Activated CD4-positive, alpha-beta T cell treated with anti-CD3 and anti-CD28 coated beads, Interleukin-2, amount 10 ng/mL, durations not matched to agents 7 days and 5 days (primary cell): ENCODE measurements at regions of chr11 and their contacts with region 1.

Region 1: GRCh38 chr11:117107701-117108590 is 9.7 kb upstream of the SIK3 start:
- DNase-seq: no peak
- H3K4me3 Mint-ChIP-seq: no peak overlapping the region
- H3K27ac Mint-ChIP-seq: no peak overlapping the region
- H3K4me1 Mint-ChIP-seq: peaks cover 7% of the 10 kb centered on the region
- H3K27me3 Mint-ChIP-seq: peaks cover 5% of the 10 kb centered on the region

Region 2: GRCh38 chr11:116853461-116854073 is 254.4 kb before region 1 on chr11:
- CTCF ChIA-PET with region 1: interaction called, 11 read pairs
- POLR2A ChIA-PET with region 1: no interaction called
- DNase-seq: peak; percentile 82
- H3K4me3 Mint-ChIP-seq: peak overlapping the region; percentile 29
- H3K27ac Mint-ChIP-seq: peak overlapping the region; percentile 95
- H3K4me1 Mint-ChIP-seq: peaks cover 67% of the 10 kb centered on the region
- H3K27me3 Mint-ChIP-seq: no peaks in the 10 kb centered on the region

Region 3: DNA sequence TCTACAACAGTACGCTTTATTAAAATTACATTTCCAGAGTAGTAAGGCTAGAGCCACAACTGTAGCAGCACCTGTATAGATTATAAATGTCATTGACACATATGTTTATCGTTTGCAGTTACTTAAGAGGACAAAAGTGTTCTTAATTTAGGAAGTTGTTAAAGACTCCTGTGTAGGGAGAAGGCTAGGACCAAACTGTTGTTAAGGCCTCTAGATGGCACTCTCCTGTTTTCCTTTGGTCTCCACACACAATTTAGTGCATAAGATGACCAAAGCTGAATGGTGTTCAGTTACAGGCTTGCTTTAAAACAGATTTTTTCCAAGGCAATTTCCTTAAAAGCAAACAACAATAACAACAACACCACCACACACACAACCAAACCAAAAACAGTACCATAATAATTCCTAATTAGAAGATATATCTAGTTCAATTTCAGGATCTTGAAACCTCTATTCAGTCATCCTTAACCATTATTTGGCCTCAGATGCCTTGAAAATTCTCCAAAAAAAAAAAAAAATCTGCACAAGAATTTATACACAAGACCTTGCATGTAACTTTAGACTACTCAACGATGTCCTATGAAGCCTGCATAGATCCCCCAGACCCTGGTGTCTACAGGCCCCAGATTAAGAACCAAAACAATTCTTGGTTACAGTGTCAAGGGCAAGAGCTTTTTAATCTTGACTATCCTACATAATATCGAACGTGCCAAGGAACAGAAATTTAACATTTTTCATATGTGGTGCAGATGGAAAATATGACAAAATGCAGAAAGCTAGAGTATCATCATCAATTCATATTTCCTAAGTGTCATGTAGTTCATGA is 227.9 kb before region 1 on chr11:
- CTCF ChIA-PET with region 1: interaction called, 10 read pairs
- POLR2A ChIA-PET with region 1: no interaction called
- DNase-seq: peak; percentile 41
- H3K4me3 Mint-ChIP-seq: no peak overlapping the region
- H3K27ac Mint-ChIP-seq: no peak overlapping the region
- H3K4me1 Mint-ChIP-seq: peaks cover 15% of the 10 kb centered on the region
- H3K27me3 Mint-ChIP-seq: no peaks in the 10 kb centered on the region

Region 4: DNA sequence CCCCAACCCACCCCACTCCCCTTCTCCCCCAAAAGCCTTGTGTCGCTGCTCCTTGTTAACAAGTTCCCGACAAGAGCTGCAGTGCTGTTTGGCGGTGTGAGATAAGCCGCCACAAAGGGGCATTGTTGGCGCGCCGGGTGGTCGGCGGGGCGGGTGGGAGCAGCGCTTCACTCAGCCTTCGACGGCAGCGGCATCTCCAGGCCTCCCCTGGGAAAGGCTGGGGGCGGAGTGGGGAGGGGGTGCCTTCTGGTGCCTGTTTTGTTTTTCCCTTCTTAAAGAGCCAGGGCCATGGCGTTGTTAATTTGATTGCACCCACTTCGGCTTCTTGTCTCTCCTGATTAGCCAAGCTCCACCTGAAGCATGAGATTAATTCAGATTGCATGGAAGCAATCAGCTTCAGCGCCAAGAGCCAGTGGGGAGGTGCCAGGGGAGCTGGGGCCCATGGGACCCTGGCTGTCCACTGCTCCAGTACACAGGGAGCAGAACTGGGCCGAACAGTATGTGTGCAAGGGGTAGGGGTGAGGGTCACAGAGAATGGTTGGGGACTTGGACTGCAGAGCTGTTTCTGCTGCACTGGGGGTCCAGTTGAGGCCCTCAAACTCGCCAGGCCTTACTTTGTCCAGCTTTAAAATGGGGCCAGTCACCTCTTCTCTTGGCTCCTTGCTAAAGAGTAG is 384.8 kb after region 1 on chr11:
- CTCF ChIA-PET with region 1: no interaction called
- POLR2A ChIA-PET with region 1: no interaction called
- DNase-seq: no peak
- H3K4me3 Mint-ChIP-seq: no peak overlapping the region
- H3K27ac Mint-ChIP-seq: no peak overlapping the region
- H3K4me1 Mint-ChIP-seq: no peaks in the 10 kb centered on the region
- H3K27me3 Mint-ChIP-seq: peaks cover 11% of the 10 kb centered on the region